ENCODE measurements at regions of chr22 and their contacts with region 1.

Region 1: DNA sequence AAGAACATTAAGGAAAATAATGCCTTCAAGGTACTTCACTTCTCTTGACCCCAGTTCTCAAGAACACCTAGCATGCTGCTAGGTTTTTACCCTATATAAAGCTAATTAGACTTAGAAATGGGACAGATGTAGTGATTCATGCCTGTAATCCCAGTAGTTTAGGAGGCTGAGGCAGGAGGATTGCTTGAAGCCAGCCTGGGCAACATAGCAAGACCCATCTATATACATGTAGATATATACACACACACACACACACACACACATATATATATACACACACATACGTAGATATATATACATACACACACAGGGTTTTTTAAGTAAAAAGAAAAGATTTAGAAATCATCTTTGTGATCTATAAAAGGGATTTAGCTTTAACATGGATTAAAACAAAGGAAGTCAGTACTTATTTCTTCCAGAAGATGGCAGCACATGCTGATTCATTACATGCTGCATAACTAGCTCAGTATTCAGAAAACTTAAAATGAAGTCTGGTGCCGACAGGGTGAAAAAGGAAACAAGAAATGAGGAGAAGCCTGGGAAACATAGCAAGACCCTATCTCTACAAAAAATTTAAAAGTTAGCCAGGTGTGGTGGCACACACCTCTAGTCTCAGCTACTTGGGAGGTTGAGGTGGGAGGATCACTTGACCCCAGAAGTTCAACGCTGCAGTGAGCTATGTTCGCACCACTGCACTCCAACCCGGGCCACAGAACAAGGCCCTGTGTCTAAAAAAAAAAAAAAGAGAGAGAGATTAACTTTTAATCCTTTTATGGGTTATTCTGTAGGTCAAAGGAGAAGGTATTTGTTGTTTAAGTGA is 28.5 kb upstream of the RBX1 start:
- DNase-seq: no peak
- H3K4me3 ChIP-seq: no peak overlapping the region
- H3K27ac ChIP-seq: no peak overlapping the region
- H3K4me1 ChIP-seq: no peaks in the 10 kb centered on the region
- H3K27me3 ChIP-seq: no peaks in the 10 kb centered on the region
- CTCF ChIP-seq: peak; percentile 46 to 77 (median 70)
- EP300 ChIP-seq: no peak
- POLR2A ChIP-seq: no peak

Region 2: DNA sequence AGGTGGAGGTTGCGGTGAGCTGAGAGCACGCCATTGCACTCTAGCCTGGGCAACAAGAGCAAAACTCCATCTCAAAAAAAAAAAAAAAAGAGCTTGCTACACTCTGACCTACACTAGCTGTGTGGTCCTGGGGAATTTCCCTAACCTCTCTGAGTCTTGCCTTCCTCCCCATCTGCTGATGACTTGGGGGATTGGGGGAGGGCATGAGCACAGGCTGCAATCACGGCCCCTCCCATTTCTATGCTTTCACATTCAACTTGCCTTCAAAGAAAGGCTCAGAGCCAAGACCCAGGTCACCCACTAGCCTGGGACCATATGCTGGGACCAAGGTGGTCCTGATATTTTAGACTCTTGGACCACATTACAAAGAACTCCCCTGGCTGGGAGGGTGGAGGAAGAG is 419.3 kb after region 1 on chr22:
- intact Hi-C with region 1: loop called in 1 of 4 experiments (anchors 10 kb)
- DNase-seq: no peak
- H3K4me3 ChIP-seq: no peak overlapping the region
- H3K27ac ChIP-seq: no peak overlapping the region
- H3K4me1 ChIP-seq: no peaks in the 10 kb centered on the region
- H3K27me3 ChIP-seq: no peaks in the 10 kb centered on the region
- CTCF ChIP-seq: no peak
- EP300 ChIP-seq: no peak
- POLR2A ChIP-seq: no peak

Region 3: GRCh38 chr22:41517172-41518047 is 594.7 kb after region 1 on chr22:
- intact Hi-C with region 1: loop called in 1 of 4 experiments (anchors 10 kb)
- DNase-seq: peak; percentile 72 to 86 (median 84)
- H3K4me3 ChIP-seq: no peak overlapping the region
- H3K27ac ChIP-seq: no peak overlapping the region
- H3K4me1 ChIP-seq: peaks cover 8% of the 10 kb centered on the region
- H3K27me3 ChIP-seq: no peaks in the 10 kb centered on the region
- CTCF ChIP-seq: peak; percentile 83 to 89 (median 86)
- EP300 ChIP-seq: no peak
- POLR2A ChIP-seq: no peak